Activated T-helper 2 cell treated with anti-CD3 and anti-CD28 coated beads, Interferon-gamma antibody, Interleukin-2, Interleukin-4, amounts not matched to agents 10 μg/mL and 5 μg/mL and 100 μg/mL, durations not matched to agents 14 hours and 24 hours and 36 hours (primary cell): ENCODE measurements at regions of chr4 and their contacts with region 1.

Region 1: GRCh38 chr4:184343502-184344177 is 126.0 kb upstream of the ENPP6 start:
- DNase-seq: peak; percentile 31
- H3K4me3 Mint-ChIP-seq: peak overlapping the region; percentile 74
- H3K27ac Mint-ChIP-seq: peak overlapping the region; percentile 68
- H3K4me1 Mint-ChIP-seq: peaks cover 27% of the 10 kb centered on the region
- H3K27me3 Mint-ChIP-seq: no peaks in the 10 kb centered on the region

Region 2: GRCh38 chr4:183370786-183371185 is 972.9 kb before region 1 on chr4:
- intact Hi-C with region 1: no loop called
- DNase-seq: no peak
- H3K4me3 Mint-ChIP-seq: no peak overlapping the region
- H3K27ac Mint-ChIP-seq: no peak overlapping the region
- H3K4me1 Mint-ChIP-seq: no peaks in the 10 kb centered on the region
- H3K27me3 Mint-ChIP-seq: no peaks in the 10 kb centered on the region

Region 3: DNA sequence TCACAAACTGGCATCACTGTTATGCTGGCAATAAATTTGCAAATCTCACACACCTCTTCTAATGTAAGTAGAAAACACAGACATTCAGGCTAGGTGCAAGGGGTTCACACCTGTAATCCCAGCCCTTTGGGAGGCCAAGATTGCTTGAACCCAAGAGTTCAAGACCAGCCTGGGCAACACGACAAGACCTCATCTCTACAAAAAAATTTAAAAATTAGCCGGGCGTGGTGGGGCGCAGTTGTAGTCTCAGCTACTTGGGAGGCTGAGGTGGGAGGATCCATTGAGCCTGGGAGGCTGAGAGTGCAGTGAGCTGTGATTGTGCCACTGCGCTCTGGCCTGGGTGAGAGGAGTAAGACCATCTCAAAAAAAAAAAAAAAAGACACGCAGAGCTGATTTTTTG is 42.8 kb before region 1 on chr4:
- intact Hi-C with region 1: loop called (anchors 5 kb)
- DNase-seq: no peak
- H3K4me3 Mint-ChIP-seq: no peak overlapping the region
- H3K27ac Mint-ChIP-seq: no peak overlapping the region
- H3K4me1 Mint-ChIP-seq: peaks cover 3% of the 10 kb centered on the region
- H3K27me3 Mint-ChIP-seq: no peaks in the 10 kb centered on the region

Region 4: GRCh38 chr4:184384056-184384809 is 40.6 kb after region 1 on chr4:
- intact Hi-C with region 1: loop called (anchors 5 kb)
- DNase-seq: no peak
- H3K4me3 Mint-ChIP-seq: peak overlapping the region; percentile 27
- H3K27ac Mint-ChIP-seq: peak overlapping the region; percentile 68
- H3K4me1 Mint-ChIP-seq: peaks cover 41% of the 10 kb centered on the region
- H3K27me3 Mint-ChIP-seq: no peaks in the 10 kb centered on the region